Mucosa of descending colon (tissue), 3 donors: ENCODE measurements at regions of chrX and their contacts with region 1.

Region 1: GRCh38 chrX:85111347-85111746 is 107.7 kb downstream of the APOOL start:
- DNase-seq: peak in 1 of 3 donors; percentile 44
- ATAC-seq: peak; percentile 40
- H3K4me3 ChIP-seq: no peak overlapping the region
- H3K4me1 ChIP-seq: no peaks in the 10 kb centered on the region
- CTCF ChIP-seq: peak; percentile 30

Region 2: DNA sequence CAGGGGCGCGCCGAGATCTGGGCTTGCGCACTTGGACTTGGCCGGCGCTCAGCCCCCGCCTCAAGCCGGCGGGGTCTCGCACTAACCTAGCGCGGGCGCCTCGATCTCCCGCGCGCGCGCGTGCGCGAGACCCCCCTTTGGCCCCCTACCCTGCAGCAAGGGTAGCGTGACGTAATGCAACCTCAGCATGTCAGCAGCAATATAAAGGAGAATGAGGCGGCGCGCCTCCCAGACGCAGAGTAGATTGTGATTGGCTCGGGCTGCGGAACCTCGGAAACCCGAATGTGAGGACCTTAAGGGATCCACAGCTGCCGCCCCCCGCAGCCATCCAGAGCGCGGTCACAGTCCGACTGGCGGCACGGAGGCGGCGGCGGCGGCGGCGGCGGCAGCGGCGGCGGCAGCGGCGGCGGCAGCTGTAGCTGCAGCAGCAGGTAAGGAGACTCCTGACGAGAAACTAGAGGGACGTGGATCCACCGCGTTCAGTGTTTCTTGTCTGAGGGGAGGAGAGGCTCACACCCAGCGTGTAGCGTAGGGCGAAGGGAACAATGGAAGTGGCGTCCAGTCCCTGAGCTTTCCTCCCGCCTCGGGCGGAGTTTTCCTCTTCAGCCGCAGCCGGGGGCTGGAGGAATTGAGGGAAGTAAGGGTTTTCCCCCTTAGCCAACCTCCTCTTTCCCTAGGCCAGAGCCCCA is 132.6 kb after region 1 on chrX and contains the starts of genes SATL1 and ZNF711:
- intact Hi-C with region 1: no loop called
- DNase-seq: peak; percentile 47 to 53 (median 52)
- ATAC-seq: peak; percentile 85
- H3K4me3 ChIP-seq: peak within 1 kb of the TSS; percentile 14
- H3K4me1 ChIP-seq: no peaks in the 10 kb centered on the region
- CTCF ChIP-seq: no peak
- total RNA-seq, gene SATL1: 0.19 TPM in 1 of 3 donors, not detected in the others
- total RNA-seq, gene ZNF711: 1.2 to 2.1 (median 1.3) TPM

Region 3: DNA sequence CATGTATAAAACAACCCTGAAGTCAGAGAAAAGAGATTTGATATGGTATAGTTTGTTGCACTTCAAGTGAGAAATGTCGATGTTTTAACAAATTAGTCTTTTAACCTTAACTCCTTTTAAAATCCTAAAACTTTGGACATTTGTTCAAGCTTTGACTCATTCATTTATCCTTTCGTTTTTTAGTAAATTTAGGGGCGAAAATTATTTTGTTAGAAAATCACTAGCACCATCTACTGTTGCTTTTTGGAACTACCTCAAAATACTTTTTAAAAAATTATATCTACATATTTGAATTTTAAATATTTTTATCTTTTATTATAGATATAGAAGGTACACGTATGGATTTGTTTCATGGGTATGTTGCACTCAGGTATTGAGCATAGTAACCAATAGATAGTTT is 433.3 kb after region 1 on chrX:
- intact Hi-C with region 1: loop called (anchors 10 kb)
- DNase-seq: no peak
- ATAC-seq: no peak
- H3K4me3 ChIP-seq: no peak overlapping the region
- H3K4me1 ChIP-seq: no peaks in the 10 kb centered on the region
- CTCF ChIP-seq: no peak